ENCODE measurements at regions of chr6 and their contacts with region 1.

Region 1: DNA sequence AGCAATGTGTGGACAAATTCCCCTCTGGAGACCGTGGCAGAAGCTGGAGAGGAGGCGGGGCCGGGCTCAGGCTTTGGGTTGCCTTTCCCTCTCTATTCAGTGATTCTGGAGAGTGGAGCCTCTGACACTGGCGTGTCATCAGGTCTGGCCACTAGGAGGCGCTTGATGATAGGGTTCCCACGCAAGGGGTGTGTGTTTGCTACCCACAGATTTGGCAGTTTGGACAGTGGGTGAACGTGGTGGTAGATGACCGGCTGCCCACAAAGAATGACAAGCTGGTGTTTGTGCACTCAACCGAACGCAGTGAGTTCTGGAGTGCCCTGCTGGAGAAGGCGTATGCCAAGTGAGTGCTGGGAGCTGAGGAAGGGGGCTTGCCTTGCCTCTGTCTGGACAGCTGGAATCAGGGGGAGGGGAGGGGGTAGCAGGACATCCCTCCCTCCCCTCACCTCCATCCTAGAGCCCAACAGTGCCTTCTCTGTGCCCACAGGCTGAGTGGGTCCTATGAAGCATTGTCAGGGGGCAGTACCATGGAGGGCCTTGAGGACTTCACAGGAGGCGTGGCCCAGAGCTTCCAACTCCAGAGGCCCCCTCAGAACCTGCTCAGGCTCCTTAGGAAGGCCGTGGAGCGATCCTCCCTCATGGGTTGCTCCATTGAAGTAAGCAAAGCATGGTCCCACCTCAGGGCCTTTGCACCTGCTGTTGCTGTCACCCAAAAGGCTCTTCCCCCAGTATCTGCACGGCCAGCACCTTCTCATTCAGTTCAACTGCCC is 14.3 kb downstream of the CAPN11 start:
- DNase-seq: peak; percentile 53 to 90
- H3K4me3 ChIP-seq: no peak overlapping the region
- H3K4me1 ChIP-seq: no peaks in the 10 kb centered on the region
- H3K27me3 ChIP-seq: no peaks in the 10 kb centered on the region

Region 2: DNA sequence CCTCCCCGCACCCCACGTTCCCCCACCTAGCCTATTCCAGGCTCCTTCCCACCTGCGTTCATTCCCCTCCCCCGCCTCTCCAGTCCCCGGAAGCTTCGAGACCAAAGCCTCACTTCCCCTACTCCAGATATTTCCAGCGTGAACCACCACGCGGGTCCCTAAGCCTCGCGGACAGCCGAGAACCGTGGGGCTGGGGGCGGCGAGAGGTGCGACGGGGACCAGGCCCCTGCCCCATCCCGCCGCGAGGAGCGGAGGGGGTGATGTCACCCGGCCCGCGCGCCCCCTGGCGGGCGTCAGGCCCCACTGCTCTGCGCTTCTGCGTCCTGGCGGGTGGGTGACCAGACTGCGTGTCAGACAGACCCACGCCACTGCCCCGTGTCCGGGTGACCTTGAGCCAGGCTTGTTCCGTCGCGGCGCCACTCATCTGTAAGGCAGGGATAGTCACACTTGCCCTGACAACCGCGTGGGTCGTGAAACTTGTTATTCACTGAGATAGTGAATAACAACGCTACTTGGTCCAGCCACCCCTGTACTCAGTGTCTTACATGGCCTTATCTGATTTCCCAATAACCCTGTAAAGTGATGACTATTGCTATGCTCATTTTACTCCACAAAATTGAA is 65.0 kb after region 1 on chr6:
- in situ Hi-C with region 1: loop called (anchors 5 kb)
- DNase-seq: peak in 1 of 2 experiments; percentile 82
- H3K4me3 ChIP-seq: peak overlapping the region; percentile 25
- H3K4me1 ChIP-seq: peaks cover 6% of the 10 kb centered on the region
- H3K27me3 ChIP-seq: no peaks in the 10 kb centered on the region